ENCODE measurements at regions of chr7 and their contacts with region 1.

Region 1: DNA sequence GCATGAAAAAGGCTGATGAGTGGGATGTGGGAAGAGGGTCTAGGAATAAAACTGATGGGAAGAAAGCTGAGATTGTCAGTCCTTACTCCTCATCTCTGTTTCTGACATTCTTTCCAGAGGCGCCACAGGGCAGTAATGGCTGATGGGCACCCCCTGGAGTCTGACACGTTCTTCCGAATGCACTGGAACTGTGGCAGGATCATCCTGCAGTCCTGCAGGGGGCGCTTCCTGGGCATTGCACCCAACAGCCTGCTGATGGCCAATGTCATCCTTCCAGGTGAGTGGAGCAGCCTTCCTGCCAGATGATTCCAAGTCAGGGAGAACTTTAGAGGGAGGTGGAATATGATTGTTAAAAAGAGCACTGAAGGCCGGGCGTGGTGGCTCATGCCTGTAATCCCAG is 4.8 kb downstream of the FSCN3 start:
- DNase-seq: peak in 1 of 2 experiments; percentile 86
- H3K4me3 ChIP-seq: no peak overlapping the region
- H3K27ac ChIP-seq: no peak overlapping the region
- H3K4me1 ChIP-seq: peaks cover 0 to 3% (median 1%) of the 10 kb centered on the region in 4 experiments; a peak in 2 of 7 replicates
- H3K27me3 ChIP-seq: no peaks in the 10 kb centered on the region; a peak in 2 of 7 replicates
- CTCF ChIP-seq: peak; percentile 94 to 97 (median 96)
- EP300 ChIP-seq: peak in 1 of 2 experiments; percentile 6; a peak in 1 of 3 replicates
- POLR2A ChIP-seq: no peak
- RAD21 ChIP-seq: peak; percentile 70 to 71

Region 2: GRCh38 chr7:127585044-127585953 is 13.0 kb before region 1 on chr7 and contains the start of gene GCC1:
- CTCF ChIA-PET with region 1: interaction called, 15 read pairs
- POLR2A ChIA-PET with region 1: interaction called, 5 read pairs
- DNase-seq: peak; percentile 66 to 100
- H3K4me3 ChIP-seq: peak within 1 kb of the TSS; percentile 80 to 95 (median 90)
- H3K27ac ChIP-seq: peak within 1 kb of the TSS; percentile 51; the same call in 1 of the 2 replicates
- H3K4me1 ChIP-seq: peaks cover 6 to 18% (median 8%) of the 10 kb centered on the region in 4 experiments
- H3K27me3 ChIP-seq: peaks cover 5 to 23% (median 22%) of the 10 kb centered on the region in 4 experiments
- CTCF ChIP-seq: no peak
- EP300 ChIP-seq: no peak; a peak in 1 of 3 replicates
- POLR2A ChIP-seq: peak in 1 of 2 experiments; percentile 92; a peak in 2 of 3 replicates
- RAD21 ChIP-seq: no peak
- total RNA-seq, gene GCC1: 14.7 and 15.0 TPM in 2 replicates

Region 3: DNA sequence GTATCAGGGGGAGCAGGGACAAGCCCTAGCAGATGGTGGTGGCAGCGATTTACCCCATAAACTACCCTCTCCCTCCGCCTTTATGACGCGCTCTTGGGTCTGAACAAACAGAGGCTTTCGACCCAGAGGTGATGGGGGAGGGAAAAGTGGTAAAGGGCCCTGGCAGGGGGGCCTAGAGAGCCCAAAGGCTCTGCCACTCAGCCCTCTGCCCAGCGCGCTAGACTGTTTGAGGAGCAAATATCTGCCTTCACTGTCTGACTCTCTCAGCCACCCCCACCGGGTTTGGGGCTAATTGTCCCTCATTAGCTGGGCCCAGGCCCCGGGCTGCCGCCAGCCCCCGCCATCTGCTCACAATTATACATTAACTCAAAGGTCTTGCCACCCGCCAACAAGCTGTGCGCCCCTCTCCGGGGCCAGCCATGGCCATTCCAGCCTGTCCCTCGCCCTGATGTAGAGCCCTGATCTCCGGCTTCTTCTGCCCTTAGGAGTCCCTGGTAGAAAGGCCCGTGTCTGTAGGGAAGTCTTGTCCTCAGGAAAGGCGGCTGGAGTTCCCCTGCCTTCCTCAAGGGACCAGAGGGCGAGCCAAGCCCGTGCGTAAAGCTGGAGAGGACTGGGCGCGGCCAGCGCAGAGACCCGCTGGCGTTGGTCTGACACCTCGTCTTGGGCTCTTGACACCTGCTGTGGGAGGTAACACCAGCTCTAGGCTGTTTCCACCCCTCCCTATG is 21.5 kb after region 1 on chr7:
- CTCF ChIA-PET with region 1: interaction called, 29 read pairs
- POLR2A ChIA-PET with region 1: interaction called, 6 read pairs
- DNase-seq: no peak
- H3K4me3 ChIP-seq: peak overlapping the region; percentile 46 to 79 (median 70)
- H3K27ac ChIP-seq: no peak overlapping the region
- H3K4me1 ChIP-seq: peaks cover 0 to 7% (median 3%) of the 10 kb centered on the region in 4 experiments; a peak in 3 of 7 replicates
- H3K27me3 ChIP-seq: peaks cover 9 to 31% (median 20%) of the 10 kb centered on the region in 4 experiments; a peak in 6 of 7 replicates
- CTCF ChIP-seq: peak; percentile 26 to 38 (median 36)
- EP300 ChIP-seq: no peak
- POLR2A ChIP-seq: 0 out of 3 replicates have a peak, but pooled peaks of 1 of the 2 experiments have one; percentile 24
- RAD21 ChIP-seq: peak; percentile 16 to 33; a peak in 3 of 4 replicates